ENCODE measurements at regions of chr19 and their contacts with region 1.

Region 1: DNA sequence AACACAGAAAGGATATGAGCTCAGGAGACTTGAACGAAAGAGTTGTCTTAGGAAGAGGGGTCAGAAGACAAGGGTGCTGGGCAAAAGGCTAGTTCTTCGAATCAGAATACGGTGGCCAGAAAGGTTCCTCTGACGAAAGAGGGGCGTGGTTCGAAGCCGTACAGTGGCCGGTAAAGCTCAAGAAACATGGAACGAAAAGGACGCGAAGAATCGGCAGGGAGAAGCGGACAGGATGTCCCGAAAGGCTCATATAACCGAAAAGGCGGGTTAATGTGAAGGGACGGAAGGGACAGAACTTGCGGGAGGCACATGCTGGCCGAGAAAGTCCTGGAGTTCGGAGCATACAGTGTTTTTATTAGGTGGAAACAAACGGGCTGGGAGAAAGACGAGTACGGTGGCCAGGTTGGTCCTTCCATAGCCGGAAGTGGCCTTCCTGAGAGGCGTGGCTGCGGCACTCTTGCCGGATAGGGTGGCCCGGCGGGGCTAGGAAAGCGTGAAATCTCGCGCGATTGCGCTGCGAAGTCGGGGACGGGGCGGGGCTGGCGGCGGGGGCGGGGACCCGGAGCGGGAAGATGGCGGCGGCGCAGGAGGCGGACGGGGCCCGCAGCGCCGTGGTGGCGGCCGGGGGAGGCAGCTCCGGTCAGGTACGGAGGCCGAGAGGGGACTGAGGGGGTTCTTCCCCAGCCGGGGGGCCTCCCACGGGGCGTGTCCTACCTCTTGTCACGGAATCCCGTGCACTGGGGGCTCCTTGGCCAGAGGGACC is at the start of gene CLPTM1:
- DNase-seq: peak; percentile 93
- H3K4me3 Mint-ChIP-seq: peak within 1 kb of the TSS; percentile 96
- H3K27ac Mint-ChIP-seq: peak within 1 kb of the TSS; percentile 93
- H3K4me1 Mint-ChIP-seq: peaks cover 40% of the 10 kb centered on the region
- H3K27me3 Mint-ChIP-seq: no peaks in the 10 kb centered on the region
- total RNA-seq, gene CLPTM1: 86.1 and 93.1 TPM in 2 replicates

Region 2: DNA sequence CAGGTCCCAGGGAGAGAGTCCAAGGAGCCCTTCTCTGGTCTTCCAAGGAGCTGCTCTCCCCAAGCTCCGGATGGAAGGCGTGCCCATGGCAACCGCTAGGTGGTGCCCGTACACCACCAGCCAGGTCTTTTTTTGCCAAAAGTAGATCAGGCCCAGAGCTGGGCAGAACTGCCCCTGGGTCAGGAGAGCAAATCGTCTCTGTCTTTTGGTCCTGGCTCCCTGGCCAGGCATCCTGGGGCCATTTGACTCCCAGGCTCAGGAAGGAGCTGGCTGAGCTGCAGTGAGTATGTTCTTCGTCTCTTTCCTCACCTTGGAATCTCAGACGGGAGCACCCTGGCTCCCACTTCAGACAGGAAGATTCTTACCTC is 231.1 kb before region 1 on chr19:
- intact Hi-C with region 1: loop called (anchors 1 kb)
- DNase-seq: peak; percentile 77
- H3K4me3 Mint-ChIP-seq: peak overlapping the region; percentile 67
- H3K27ac Mint-ChIP-seq: peak overlapping the region; percentile 25
- H3K4me1 Mint-ChIP-seq: peaks cover 58% of the 10 kb centered on the region
- H3K27me3 Mint-ChIP-seq: no peaks in the 10 kb centered on the region

Region 3: DNA sequence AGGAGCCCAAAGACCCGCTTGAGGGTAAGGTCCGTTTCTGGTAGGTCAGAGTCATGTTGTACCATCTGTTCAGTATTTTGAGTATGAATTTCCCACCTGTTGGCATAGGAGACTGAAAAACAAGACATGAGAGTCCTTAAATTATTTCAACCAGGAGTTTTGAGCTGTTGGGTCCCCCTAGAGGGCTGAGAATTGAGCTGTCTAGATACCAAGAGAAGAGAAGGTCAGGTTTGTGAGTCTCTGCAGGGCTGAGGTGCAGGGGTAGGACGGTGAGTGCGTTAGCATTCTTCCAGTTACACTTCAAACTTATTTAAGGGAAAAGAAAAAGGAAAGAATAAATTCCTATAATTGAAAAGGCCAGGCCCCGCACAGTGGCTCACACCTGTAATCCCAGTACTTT is 172.3 kb before region 1 on chr19:
- intact Hi-C with region 1: loop called (anchors 1 kb)
- DNase-seq: no peak
- H3K4me3 Mint-ChIP-seq: no peak overlapping the region
- H3K27ac Mint-ChIP-seq: no peak overlapping the region
- H3K4me1 Mint-ChIP-seq: no peaks in the 10 kb centered on the region
- H3K27me3 Mint-ChIP-seq: peaks cover 2% of the 10 kb centered on the region

Region 4: GRCh38 chr19:44845612-44846454 is 109.2 kb before region 1 on chr19 and contains the start of gene NECTIN2:
- intact Hi-C with region 1: loop called (anchors 1 kb)
- DNase-seq: peak; percentile 73
- H3K4me3 Mint-ChIP-seq: peak within 1 kb of the TSS; percentile 83
- H3K27ac Mint-ChIP-seq: peak within 1 kb of the TSS; percentile 55
- H3K4me1 Mint-ChIP-seq: peaks cover 21% of the 10 kb centered on the region
- H3K27me3 Mint-ChIP-seq: peaks cover 34% of the 10 kb centered on the region
- total RNA-seq, gene NECTIN2: 0.08 and 0.39 TPM in 2 replicates

Region 5: GRCh38 chr19:44903602-44904425 is 51.2 kb before region 1 on chr19:
- intact Hi-C with region 1: loop called (anchors 1 kb)
- DNase-seq: peak; percentile 54
- H3K4me3 Mint-ChIP-seq: no peak overlapping the region
- H3K27ac Mint-ChIP-seq: no peak overlapping the region
- H3K4me1 Mint-ChIP-seq: peaks cover 8% of the 10 kb centered on the region
- H3K27me3 Mint-ChIP-seq: peaks cover 16% of the 10 kb centered on the region

Region 6: DNA sequence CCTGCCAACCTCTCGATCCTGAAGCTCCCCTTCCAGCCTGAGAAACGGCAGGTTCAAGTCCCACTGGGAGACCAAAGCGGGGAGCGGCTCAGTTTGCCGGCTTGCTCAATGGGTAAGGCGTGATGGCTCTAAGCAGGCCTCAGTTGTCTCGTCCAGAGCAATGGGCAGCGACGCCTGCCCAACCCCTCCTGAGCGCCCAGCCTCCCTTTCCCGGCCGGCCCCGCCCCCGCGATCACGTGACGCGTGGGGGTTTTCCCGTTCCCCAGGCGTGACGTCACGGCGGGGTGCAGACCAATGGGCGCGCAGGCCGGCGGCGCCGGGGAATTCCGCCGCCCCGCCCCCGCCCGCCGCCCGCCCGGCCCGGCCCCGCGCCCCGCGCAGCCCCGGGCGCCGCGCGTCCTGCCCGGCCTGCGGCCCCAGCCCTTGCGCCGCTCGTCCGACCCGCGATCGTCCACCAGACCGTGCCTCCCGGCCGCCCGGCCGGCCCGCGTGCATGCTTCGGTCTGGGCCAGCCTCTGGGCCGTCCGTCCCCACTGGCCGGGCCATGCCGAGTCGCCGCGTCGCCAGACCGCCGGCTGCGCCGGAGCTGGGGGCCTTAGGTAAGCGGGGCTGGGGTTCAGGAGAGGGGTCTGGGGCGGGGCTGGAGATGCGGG is 46.2 kb after region 1 on chr19 and contains the start of gene RELB:
- intact Hi-C with region 1: loop called (anchors 1 kb)
- DNase-seq: peak; percentile 96
- H3K4me3 Mint-ChIP-seq: peak within 1 kb of the TSS; percentile 91
- H3K27ac Mint-ChIP-seq: peak within 1 kb of the TSS; percentile 97
- H3K4me1 Mint-ChIP-seq: peaks cover 11% of the 10 kb centered on the region
- H3K27me3 Mint-ChIP-seq: no peaks in the 10 kb centered on the region
- total RNA-seq, gene RELB: 73.3 and 77.5 TPM in 2 replicates

Region 7: GRCh38 chr19:45059278-45059965 is 104.4 kb after region 1 on chr19:
- intact Hi-C with region 1: no loop called
- DNase-seq: peak; percentile 73
- H3K4me3 Mint-ChIP-seq: no peak overlapping the region
- H3K27ac Mint-ChIP-seq: peak overlapping the region; percentile 63
- H3K4me1 Mint-ChIP-seq: peaks cover 5% of the 10 kb centered on the region
- H3K27me3 Mint-ChIP-seq: no peaks in the 10 kb centered on the region

Measured in activated T-helper 1 cell treated with anti-CD3 and anti-CD28 coated beads, Interleukin-12 subunit alpha, Interleukin-12 subunit beta, Interleukin-2, Interleukin-4 antibody, amounts not matched to agents 30 ng/mL and 10 ng/mL and 1 ng/mL, durations not matched to agents 14 hours and 24 hours and 36 hours (primary cell).